ENCODE measurements at regions of chr14 and their contacts with region 1.

Region 1: DNA sequence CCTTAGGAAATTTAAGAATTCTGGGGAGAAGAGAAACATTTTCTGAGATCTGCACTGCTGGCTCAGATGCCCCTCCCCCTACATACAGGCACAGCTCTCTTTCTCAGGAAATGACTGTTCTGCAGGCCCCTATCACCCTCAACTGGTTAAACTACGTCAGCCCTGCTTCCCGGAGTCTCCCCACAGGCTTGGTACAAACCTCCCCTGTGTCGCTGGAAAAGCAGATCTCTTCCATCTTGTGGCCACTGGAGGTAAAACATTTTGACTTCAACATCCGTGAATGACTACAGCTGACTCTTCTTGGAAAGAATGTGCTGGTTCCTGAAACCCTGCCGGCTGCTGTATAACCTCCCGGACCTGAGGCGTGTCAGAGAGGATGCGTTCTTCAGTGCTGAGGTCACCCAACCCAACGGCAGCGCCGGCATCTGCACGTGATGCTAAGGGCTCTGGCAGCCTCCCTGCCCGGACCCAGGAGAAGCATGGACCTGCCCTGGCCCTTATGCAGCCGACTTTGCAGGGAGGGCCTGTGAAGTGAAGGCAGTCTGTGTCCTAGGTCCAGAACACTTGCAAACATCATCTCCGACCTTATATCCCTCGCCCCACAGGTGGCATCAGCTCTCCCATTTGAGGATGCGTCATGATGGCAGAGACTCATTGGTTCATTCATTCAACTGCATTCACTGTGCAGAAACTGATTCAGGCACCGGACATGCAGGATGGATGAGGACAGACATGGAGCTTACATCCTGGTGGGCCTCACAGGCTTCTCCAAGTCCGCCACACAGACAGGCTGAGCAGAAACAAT is 129.3 kb downstream of the GCH1 start:
- H3K4me3 ChIP-seq: no peak overlapping the region
- H3K27ac ChIP-seq: 0 out of 2 replicates have a peak overlapping the region, but pooled peaks have one; percentile 3
- H3K4me1 ChIP-seq: 0 out of 2 replicates have a peak, but pooled peaks cover 2% of the 10 kb centered on the region
- CTCF ChIP-seq: peak; percentile 57; the same call in 1 of the 2 replicates

Region 2: GRCh38 chr14:54704768-54705167 is 68.6 kb before region 1 on chr14:
- CTCF ChIA-PET with region 1: interaction called, 11 read pairs
- POLR2A ChIA-PET with region 1: no interaction called
- H3K4me3 ChIP-seq: no peak overlapping the region
- H3K27ac ChIP-seq: no peak overlapping the region
- H3K4me1 ChIP-seq: no peaks in the 10 kb centered on the region
- CTCF ChIP-seq: no peak

Region 3: DNA sequence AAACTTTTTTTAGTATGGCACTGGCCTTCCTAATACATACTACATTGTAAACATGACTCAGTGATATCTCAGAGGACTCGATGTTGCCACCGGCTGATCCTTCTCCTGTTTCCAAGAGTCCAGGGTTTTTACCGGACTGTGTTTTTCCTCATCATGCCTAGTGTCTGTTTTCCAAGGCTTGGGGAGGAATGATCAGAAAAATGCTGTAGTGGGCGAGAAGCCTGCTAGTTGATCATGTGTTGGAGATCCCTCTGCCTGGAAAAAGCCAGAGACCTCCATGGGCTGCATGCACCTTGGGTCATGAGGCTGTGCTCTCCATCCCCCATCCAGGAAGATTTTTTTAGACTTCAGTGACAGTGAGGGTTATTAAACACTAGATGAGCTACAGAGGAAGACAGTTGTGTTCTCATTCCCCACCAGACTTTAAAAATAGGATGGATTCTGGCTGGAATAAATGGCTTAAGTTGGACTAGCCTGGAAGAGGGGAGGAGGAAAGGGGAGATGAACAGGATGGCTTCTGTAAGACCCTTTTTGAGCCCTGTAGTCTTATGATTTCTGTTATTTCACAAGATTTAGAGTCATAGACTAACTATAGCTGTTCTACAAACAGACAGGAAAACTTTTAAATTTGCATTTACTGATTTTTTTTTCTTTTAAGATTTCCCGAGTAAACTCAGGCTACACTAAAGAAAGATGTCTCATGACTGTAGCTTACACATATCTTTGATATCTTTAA is 60.7 kb before region 1 on chr14:
- CTCF ChIA-PET with region 1: interaction called, 14 read pairs
- POLR2A ChIA-PET with region 1: no interaction called
- H3K4me3 ChIP-seq: no peak overlapping the region
- H3K27ac ChIP-seq: no peak overlapping the region
- H3K4me1 ChIP-seq: no peaks in the 10 kb centered on the region; the same call in 1 of the 2 replicates
- CTCF ChIP-seq: no peak

Region 4: DNA sequence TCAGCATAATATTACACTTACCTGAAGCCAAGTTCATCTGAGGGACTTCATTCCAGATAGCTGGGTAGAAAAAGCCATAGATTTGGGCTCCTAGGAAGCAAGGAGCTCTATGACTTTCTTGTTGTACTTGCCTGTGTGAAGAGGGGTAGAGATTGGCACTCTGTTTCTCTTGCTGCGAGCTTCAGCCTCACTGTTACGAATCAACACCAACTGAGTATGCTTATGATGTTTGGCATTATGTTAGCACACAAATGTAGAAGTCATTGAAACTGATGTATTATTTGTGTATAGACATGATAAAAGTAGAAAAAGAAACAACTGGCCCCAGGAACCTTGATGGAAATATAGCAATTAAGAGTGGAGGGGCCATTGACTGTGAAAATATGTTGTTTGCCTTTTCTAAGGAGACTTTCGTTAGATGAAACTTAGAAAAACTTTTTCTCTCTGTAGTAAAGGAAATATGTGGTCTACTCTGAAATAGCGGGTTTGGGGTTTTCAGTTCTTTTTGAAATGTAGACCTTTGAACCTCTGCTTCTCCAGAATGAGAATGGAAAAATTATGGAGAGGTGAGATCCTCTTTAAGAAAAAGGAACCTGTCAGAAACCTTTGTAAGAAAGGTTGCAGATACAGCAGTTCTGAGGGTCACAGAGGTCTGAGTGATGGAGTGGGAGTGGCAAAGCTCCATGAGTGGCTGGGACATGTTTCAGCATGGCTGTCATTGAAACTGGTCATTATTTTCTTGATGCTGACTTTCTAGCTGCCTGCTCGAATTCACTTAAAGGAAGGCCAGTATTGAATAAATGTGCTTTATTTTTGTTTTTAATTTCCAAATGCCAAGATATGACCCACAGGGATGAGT is 30.7 kb before region 1 on chr14:
- CTCF ChIA-PET with region 1: interaction called, 13 read pairs
- POLR2A ChIA-PET with region 1: no interaction called
- H3K4me3 ChIP-seq: no peak overlapping the region
- H3K27ac ChIP-seq: no peak overlapping the region
- H3K4me1 ChIP-seq: no peaks in the 10 kb centered on the region
- CTCF ChIP-seq: no peak

Region 5: DNA sequence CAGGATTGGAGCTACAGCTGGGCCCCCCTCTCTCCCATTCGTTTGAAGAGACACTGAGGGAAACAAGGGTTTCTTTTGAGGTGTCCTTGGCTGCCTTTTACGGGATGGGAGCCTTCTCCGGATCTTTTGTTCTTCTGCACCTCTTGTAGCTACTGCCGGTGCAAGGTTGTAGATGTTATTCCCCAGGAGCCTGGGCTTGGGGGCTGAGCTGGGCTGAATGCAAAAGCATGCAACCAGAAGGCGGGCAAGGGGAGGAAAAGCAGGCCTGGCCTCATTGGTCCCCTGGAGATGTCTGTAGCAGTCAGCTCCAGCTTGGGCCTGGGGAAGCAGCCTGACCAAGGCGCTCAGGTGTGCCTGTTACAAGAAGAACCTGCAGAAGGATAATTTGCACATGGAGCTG is 18.9 kb after region 1 on chr14:
- CTCF ChIA-PET with region 1: interaction called, 16 read pairs
- POLR2A ChIA-PET with region 1: no interaction called
- H3K4me3 ChIP-seq: no peak overlapping the region
- H3K27ac ChIP-seq: no peak overlapping the region
- H3K4me1 ChIP-seq: no peaks in the 10 kb centered on the region
- CTCF ChIP-seq: no peak

Measured in HEK293 (cell line).